ENCODE measurements at regions of chr10 and their contacts with region 1.

Region 1: DNA sequence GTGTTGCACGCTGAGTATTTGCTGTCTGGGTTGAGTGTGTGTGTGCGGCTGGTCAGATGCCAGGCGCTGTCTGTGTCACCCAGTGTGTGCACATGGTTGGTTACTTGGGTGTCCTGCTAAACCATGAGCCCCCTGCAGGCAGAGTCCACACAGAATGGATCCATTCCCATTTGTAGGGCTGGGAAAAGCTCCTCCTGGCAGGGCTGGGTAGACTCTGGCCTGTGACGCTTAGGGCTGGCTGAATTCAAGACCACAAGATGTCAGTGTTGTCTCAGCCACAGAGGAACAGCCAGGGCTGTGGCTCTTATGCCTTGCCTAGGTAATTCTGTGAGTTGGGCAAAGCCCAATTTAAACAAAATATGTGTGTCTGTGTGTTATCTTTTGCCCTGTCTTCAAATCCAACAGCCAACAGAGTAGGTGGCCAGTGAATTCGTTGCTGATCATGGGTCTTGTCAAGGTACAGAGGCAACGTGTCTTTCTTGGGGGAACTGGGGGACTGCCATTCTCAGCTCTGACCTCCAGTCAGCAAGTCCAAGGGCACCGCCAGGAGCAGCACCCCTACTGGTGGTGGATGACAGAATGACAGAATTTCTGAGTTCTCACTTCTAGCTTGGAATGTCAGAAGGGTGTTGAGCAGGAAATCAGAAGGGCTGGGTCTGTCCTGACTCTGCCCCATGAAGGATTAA is 285.1 kb downstream of the CCSER2 start:
- DNase-seq: no peak
- ATAC-seq: peak; percentile 89
- H3K4me3 ChIP-seq: no peak overlapping the region
- H3K27ac ChIP-seq: no peak overlapping the region
- H3K4me1 ChIP-seq: no peaks in the 10 kb centered on the region
- H3K27me3 ChIP-seq: no peaks in the 10 kb centered on the region
- CTCF ChIP-seq: peak; percentile 14 to 53 (median 19); a peak in 3 of 6 replicates
- EP300 ChIP-seq: no peak
- POLR2A ChIP-seq: no peak
- RAD21 ChIP-seq: peak; percentile 50

Region 2: DNA sequence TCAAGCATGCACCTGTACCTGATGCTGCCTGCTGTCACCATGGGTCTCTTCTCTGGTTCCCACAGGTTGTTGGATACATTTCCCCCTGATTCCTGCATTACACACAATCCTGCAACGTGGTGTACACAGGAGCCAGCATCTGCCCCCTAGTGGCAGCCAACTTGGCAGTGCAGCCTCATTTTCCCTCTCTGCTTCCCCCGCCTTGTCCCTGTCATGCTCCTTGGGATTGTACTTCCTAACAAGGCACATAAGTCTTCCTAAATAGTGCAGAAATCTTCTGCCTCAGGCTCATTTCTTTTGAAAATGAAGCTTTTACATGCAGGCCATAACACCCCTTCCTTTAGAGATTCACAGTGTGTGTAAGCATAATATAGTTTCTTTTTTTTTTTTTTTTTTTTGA is 102.4 kb after region 1 on chr10:
- CTCF ChIA-PET with region 1: no interaction called
- POLR2A ChIA-PET with region 1: no interaction called
- RAD21 ChIA-PET with region 1: no interaction called
- SMC1A ChIA-PET with region 1: interaction called, 3 read pairs
- in situ Hi-C with region 1: no loop called
- intact Hi-C with region 1: loop called (anchors 5 kb)
- DNase-seq: no peak
- ATAC-seq: peak; percentile 87
- H3K4me3 ChIP-seq: no peak overlapping the region
- H3K27ac ChIP-seq: no peak overlapping the region
- H3K4me1 ChIP-seq: no peaks in the 10 kb centered on the region
- H3K27me3 ChIP-seq: no peaks in the 10 kb centered on the region; a peak in 1 of 4 replicates
- CTCF ChIP-seq: peak; percentile 59 to 81 (median 77)
- EP300 ChIP-seq: no peak
- POLR2A ChIP-seq: no peak
- RAD21 ChIP-seq: peak; percentile 39

Region 3: GRCh38 chr10:84743483-84743882 is 130.0 kb after region 1 on chr10:
- CTCF ChIA-PET with region 1: no interaction called
- POLR2A ChIA-PET with region 1: no interaction called
- RAD21 ChIA-PET with region 1: no interaction called
- SMC1A ChIA-PET with region 1: no interaction called
- in situ Hi-C with region 1: no loop called
- intact Hi-C with region 1: loop called (anchors 1 kb)
- DNase-seq: no peak
- ATAC-seq: peak; percentile 31; the same call in 1 of the 3 replicates
- H3K4me3 ChIP-seq: no peak overlapping the region
- H3K27ac ChIP-seq: no peak overlapping the region
- H3K4me1 ChIP-seq: no peaks in the 10 kb centered on the region
- H3K27me3 ChIP-seq: no peaks in the 10 kb centered on the region
- CTCF ChIP-seq: peak; percentile 22 to 37 (median 29); a peak in 4 of 6 replicates
- EP300 ChIP-seq: no peak
- POLR2A ChIP-seq: no peak
- RAD21 ChIP-seq: no peak